ENCODE measurements at regions of chr11 and their contacts with region 1.

Region 1: DNA sequence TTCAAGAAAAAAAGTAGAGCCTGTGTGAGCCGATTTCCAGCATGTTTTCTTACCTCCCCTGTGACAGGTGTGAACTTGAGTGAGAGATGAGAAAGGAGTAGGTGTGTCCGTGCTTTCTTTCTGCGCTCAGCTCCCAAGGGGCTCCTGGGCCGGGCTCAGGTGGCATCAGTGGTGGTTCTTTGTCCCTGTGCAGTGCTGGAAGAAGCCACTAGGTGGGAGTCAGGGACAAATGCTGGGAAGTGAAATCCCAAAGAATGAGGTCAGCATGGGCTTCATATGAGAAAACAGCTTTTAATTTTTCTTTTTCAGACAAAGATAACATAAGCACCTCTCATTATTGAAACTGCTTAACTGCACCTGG is 57.8 kb downstream of the PPFIBP2 start:
- DNase-seq: peak; percentile 69
- ATAC-seq: peak; percentile 79
- H3K4me3 ChIP-seq: no peak overlapping the region
- H3K27ac ChIP-seq: peak overlapping the region; percentile 73
- H3K4me1 ChIP-seq: peaks cover 38% of the 10 kb centered on the region
- H3K27me3 ChIP-seq: peaks cover 15% of the 10 kb centered on the region
- CTCF ChIP-seq: peak; percentile 97
- POLR2A ChIP-seq: no peak
- RAD21 ChIP-seq: peak; percentile 97

Region 2: DNA sequence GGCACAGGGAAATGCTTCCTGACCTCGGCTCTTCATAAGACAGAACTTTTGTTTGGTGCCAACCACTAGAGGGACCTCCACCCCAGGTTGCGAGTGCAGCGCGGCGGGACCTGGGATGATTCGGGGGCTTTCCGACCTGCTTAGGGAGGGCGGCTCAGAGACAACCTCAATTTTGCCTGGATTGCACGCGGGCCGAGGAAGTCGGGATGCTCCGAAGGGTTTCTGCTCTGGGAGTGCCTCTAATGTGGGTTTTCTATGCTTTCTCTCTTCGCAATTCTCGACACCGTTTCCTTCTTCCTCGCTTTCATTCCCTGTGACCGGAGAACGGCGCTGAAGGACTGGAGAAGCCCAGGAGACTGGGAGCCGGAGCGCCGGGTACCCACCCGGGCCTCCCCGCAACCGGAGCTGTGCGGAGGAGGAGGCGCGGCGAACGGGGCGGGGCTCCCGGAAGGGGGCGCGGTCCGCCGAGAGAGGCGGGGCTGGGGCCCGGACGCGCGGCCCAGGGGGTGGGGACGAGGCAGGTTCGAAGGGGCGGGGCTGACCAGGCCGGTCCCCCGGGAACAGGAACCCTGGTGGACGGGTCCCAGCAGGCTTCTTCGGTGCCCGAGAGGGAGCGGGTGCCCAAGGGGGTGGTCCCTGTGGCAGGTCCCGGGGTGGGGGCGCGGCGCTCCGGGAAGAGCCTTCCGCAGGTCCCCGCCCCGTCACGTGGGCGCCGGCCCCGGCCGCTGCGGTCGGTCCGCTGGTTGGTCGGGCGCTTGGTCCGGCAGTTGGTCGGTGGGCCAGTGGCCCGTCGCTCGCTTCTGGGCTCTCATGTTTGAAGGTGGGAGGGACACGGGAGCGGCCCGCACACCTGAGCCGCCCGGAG is 58.2 kb before region 1 on chr11 and contains the start of gene PPFIBP2:
- CTCF ChIA-PET with region 1: interaction called, 6 read pairs
- POLR2A ChIA-PET with region 1: no interaction called
- dilution Hi-C with region 1: no loop called
- in situ Hi-C with region 1: no loop called
- intact Hi-C with region 1: loop called (anchors 1 kb)
- DNase-seq: peak; percentile 47
- ATAC-seq: peak; percentile 98
- H3K4me3 ChIP-seq: peak within 1 kb of the TSS; percentile 58
- H3K27ac ChIP-seq: no peak within 1 kb of the TSS
- H3K4me1 ChIP-seq: peaks cover 2% of the 10 kb centered on the region; the same call in 1 of the 2 replicates
- H3K27me3 ChIP-seq: peaks cover 27% of the 10 kb centered on the region
- CTCF ChIP-seq: peak; percentile 60
- POLR2A ChIP-seq: no peak
- RAD21 ChIP-seq: peak; percentile 52
- total RNA-seq, gene PPFIBP2: 9.4 and 11.8 TPM in 2 replicates

Region 3: GRCh38 chr11:7651140-7651551 is 79.5 kb after region 1 on chr11:
- CTCF ChIA-PET with region 1: interaction called, 59 read pairs
- POLR2A ChIA-PET with region 1: no interaction called
- dilution Hi-C with region 1: no loop called
- in situ Hi-C with region 1: loop called (anchors 5 kb)
- intact Hi-C with region 1: loop called (anchors 2 kb)
- DNase-seq: peak; percentile 13
- ATAC-seq: no peak
- H3K4me3 ChIP-seq: no peak overlapping the region
- H3K27ac ChIP-seq: no peak overlapping the region
- H3K4me1 ChIP-seq: no peaks in the 10 kb centered on the region
- H3K27me3 ChIP-seq: no peaks in the 10 kb centered on the region
- CTCF ChIP-seq: no peak
- POLR2A ChIP-seq: no peak
- RAD21 ChIP-seq: no peak

Region 4: DNA sequence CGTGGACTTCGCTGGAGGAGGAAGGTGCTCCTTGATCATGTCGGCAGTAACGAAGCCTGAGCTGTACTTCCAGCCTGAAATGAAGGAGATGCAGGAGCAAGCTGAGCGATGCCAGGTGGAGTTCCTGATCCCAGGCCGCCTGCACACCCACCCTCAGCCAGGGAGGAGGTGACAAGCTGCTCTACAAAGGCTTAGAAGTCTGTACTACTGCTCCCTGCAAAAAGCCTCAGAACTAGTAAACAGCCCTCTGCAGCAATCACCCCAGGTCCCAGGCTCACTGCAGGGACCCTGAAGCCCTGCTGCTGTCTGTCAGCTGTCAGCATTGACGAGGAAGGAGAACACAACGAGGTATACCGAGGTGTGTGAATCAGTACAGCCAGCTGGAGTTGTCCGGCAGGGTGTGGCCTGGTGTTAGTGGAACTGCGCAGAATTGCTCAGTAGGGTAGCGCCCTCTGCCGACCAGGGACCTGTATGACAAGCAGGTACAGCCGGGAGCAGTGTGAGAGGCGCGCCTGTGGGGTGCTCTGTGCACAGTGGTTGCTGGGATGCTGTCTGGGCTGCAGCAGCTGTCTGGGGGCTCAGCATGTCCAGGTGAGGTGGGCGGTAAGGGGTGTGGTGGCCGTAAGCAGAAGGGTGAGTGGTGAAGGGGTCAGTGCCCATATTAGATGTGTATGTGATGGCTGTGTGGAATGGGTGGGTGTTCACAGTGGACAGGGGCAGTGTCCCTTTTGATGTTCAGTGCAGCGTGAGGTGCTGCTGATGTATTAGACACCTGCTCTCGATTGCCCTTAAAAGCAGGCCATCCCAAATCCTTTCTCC is 94.1 kb after region 1 on chr11:
- CTCF ChIA-PET with region 1: interaction called, 4 read pairs
- POLR2A ChIA-PET with region 1: no interaction called
- dilution Hi-C with region 1: no loop called
- in situ Hi-C with region 1: no loop called
- intact Hi-C with region 1: loop called (anchors 2 kb)
- DNase-seq: peak; percentile 44
- ATAC-seq: peak; percentile 90
- H3K4me3 ChIP-seq: no peak overlapping the region
- H3K27ac ChIP-seq: no peak overlapping the region
- H3K4me1 ChIP-seq: no peaks in the 10 kb centered on the region
- H3K27me3 ChIP-seq: no peaks in the 10 kb centered on the region
- CTCF ChIP-seq: peak; percentile 68
- POLR2A ChIP-seq: no peak
- RAD21 ChIP-seq: peak; percentile 77

Region 5: GRCh38 chr11:7694235-7694634 is 122.6 kb after region 1 on chr11:
- CTCF ChIA-PET with region 1: interaction called, 10 read pairs
- POLR2A ChIA-PET with region 1: no interaction called
- dilution Hi-C with region 1: no loop called
- in situ Hi-C with region 1: loop called (anchors 10 kb)
- intact Hi-C with region 1: no loop called
- DNase-seq: no peak
- ATAC-seq: no peak
- H3K4me3 ChIP-seq: no peak overlapping the region
- H3K27ac ChIP-seq: no peak overlapping the region
- H3K4me1 ChIP-seq: 0 out of 2 replicates have a peak, but pooled peaks cover 2% of the 10 kb centered on the region
- H3K27me3 ChIP-seq: peaks cover 13% of the 10 kb centered on the region
- CTCF ChIP-seq: no peak
- POLR2A ChIP-seq: no peak
- RAD21 ChIP-seq: no peak

Region 6: DNA sequence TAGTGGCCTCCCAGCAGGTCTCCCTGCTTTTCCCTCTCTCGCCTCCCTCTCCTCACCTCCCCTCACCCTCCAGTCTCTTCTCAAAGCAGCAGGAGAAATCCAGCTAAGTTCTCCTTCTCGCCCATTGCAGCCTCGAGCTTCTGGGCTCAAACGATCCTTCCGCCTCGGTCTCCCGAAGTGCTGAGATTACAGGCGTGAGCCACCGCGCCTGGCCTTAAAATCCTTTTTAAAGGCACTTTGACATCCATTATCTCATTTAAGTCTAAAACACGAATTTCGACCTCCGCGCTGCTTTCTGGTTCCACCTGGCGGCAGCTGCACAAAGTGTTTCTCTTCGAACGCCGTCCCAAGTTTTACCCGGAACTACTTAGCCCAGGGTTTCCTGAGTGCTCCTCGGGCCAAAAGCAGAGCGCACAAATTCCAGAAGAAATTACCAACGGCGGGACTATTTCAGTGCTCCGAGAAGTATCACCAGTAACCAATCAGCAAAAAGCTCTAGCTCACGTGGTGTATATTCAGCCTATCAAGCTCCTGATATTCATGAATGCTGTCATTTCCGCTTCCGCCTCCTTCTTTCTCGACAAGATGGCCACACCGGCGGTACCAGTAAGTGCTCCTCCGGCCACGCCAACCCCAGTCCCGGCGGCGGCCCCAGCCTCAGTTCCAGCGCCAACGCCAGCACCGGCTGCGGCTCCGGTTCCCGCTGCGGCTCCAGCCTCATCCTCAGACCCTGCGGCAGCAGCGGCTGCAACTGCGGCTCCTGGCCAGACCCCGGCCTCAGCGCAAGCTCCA is 415.3 kb after region 1 on chr11 and contains the start of gene EIF3F:
- CTCF ChIA-PET with region 1: no interaction called
- POLR2A ChIA-PET with region 1: no interaction called
- dilution Hi-C with region 1: no loop called
- in situ Hi-C with region 1: loop called (anchors 25 kb)
- intact Hi-C with region 1: loop called (anchors 2 kb)
- DNase-seq: peak; percentile 100
- ATAC-seq: peak; percentile 98
- H3K4me3 ChIP-seq: peak within 1 kb of the TSS; percentile 97
- H3K27ac ChIP-seq: peak within 1 kb of the TSS; percentile 81
- H3K4me1 ChIP-seq: peaks cover 7% of the 10 kb centered on the region
- H3K27me3 ChIP-seq: no peaks in the 10 kb centered on the region
- CTCF ChIP-seq: peak; percentile 96
- POLR2A ChIP-seq: 0 out of 2 replicates have a peak, but pooled peaks have one; percentile 13
- RAD21 ChIP-seq: peak; percentile 93
- total RNA-seq, gene EIF3F: 279 and 308 TPM in 2 replicates